CD8-positive, alpha-beta T cell (primary cell): ENCODE measurements at regions of chrX and their contacts with region 1.

Region 1: GRCh38 chrX:48696301-48697181 is at the start of gene SUV39H1:
- DNase-seq: peak; percentile 67 to 94 (median 79)
- ATAC-seq: peak; percentile 93
- H3K4me3 ChIP-seq: peak within 1 kb of the TSS; percentile 63 to 72
- H3K4me3 Mint-ChIP-seq: peak within 1 kb of the TSS; percentile 89
- H3K27ac ChIP-seq: peak within 1 kb of the TSS; percentile 85 to 87
- H3K27ac Mint-ChIP-seq: peak within 1 kb of the TSS; percentile 98
- H3K4me1 ChIP-seq: peaks cover 15% of the 10 kb centered on the region
- H3K4me1 Mint-ChIP-seq: peaks cover 27% of the 10 kb centered on the region
- H3K27me3 ChIP-seq: no peaks in the 10 kb centered on the region
- H3K27me3 Mint-ChIP-seq: no peaks in the 10 kb centered on the region
- CTCF ChIP-seq: no peak
- total RNA-seq, gene SUV39H1: 8.2 to 8.6 TPM

Region 2: DNA sequence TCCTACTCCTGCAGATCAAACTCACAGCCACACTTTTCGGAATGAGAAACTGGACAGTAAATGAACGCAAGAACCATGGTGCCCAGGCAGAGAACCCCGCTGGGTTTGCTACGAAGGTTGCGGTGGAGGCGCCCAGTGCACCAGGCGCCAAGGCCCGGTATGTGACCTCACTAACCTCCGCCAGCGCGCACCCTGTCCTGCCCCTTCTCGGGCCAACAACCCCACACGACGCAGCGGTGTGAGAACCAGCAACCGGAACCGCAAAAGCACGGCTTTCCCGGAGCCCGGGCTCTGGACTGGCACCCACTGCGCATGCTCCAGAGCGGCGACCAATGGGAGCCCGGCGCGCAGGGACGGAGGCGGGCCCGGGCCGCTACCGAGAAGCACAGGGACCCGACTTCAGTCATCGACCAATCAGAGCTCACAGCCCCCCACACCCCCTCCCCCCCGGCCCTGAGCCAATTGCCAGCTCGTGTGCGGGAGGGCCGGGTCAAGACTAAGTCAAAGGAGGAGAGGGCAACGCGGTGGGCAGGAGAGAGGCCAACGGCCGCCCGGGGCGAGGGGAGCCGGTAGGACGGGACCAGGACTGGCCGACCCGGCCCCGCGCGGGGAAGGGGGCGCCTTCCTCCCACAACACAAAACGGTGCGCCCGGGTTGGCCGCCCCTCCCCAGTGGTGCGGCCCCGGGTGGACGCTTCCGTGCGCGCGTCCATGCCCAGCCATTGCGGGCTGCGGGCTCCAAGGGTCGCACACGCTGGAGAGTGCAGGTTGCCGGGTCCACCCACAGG is 20.2 kb before region 1 on chrX:
- CTCF ChIA-PET with region 1: no interaction called
- POLR2A ChIA-PET with region 1: no interaction called
- intact Hi-C with region 1: loop called (anchors 1 kb)
- DNase-seq: peak; percentile 73 to 93 (median 83)
- ATAC-seq: peak; percentile 94
- H3K4me3 ChIP-seq: peak overlapping the region; percentile 74 to 76
- H3K4me3 Mint-ChIP-seq: peak overlapping the region; percentile 92
- H3K27ac ChIP-seq: peak overlapping the region; percentile 78 to 86
- H3K27ac Mint-ChIP-seq: peak overlapping the region; percentile 93
- H3K4me1 ChIP-seq: peaks cover 6% of the 10 kb centered on the region
- H3K4me1 Mint-ChIP-seq: peaks cover 30% of the 10 kb centered on the region
- H3K27me3 ChIP-seq: no peaks in the 10 kb centered on the region
- H3K27me3 Mint-ChIP-seq: no peaks in the 10 kb centered on the region
- CTCF ChIP-seq: no peak

Region 3: GRCh38 chrX:48683411-48683982 is 13.0 kb before region 1 on chrX and contains the start of gene WAS:
- CTCF ChIA-PET with region 1: no interaction called
- POLR2A ChIA-PET with region 1: interaction called, 17 read pairs
- intact Hi-C with region 1: loop called in 1 of 2 experiments (anchors 2 kb)
- DNase-seq: peak in 8 of 9 experiments; percentile 24 to 77 (median 48)
- ATAC-seq: peak; percentile 83
- H3K4me3 ChIP-seq: peak within 1 kb of the TSS; percentile 64 to 77
- H3K4me3 Mint-ChIP-seq: peak within 1 kb of the TSS; percentile 90
- H3K27ac ChIP-seq: peak within 1 kb of the TSS; percentile 73 to 87
- H3K27ac Mint-ChIP-seq: peak within 1 kb of the TSS; percentile 93
- H3K4me1 ChIP-seq: peaks cover 35% of the 10 kb centered on the region
- H3K4me1 Mint-ChIP-seq: peaks cover 58% of the 10 kb centered on the region
- H3K27me3 ChIP-seq: no peaks in the 10 kb centered on the region
- H3K27me3 Mint-ChIP-seq: no peaks in the 10 kb centered on the region
- CTCF ChIP-seq: no peak
- total RNA-seq, gene WAS: 50.6 to 54.9 TPM

Region 4: DNA sequence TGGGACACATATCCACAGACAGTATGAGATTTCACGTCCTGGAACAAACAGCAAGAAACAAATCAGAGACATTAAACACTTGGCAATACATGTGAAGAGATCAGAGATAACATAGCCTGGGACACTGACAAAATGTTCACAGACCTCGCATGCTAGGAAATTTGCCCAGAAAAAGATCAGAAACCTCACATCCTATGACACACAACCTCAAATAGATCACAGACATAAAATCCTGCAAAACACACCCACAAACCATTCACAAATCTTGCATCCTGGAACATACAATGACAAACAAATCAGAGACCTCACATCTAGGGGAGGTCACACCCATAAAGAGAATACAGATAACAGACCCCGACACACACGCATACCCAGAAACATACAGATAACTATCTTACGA is 18.0 kb after region 1 on chrX:
- CTCF ChIA-PET with region 1: no interaction called
- POLR2A ChIA-PET with region 1: interaction called, 3 read pairs
- intact Hi-C with region 1: loop called (anchors 2 kb)
- DNase-seq: peak in 2 of 9 experiments; percentile 40 to 62
- ATAC-seq: peak; percentile 34
- H3K4me3 ChIP-seq: peak overlapping the region in 1 of 2 experiments; percentile 35
- H3K4me3 Mint-ChIP-seq: peak overlapping the region; percentile 2
- H3K27ac ChIP-seq: peak overlapping the region; percentile 75 to 76
- H3K27ac Mint-ChIP-seq: peak overlapping the region; percentile 92
- H3K4me1 ChIP-seq: peaks cover 78% of the 10 kb centered on the region
- H3K4me1 Mint-ChIP-seq: peaks cover 83% of the 10 kb centered on the region
- H3K27me3 ChIP-seq: no peaks in the 10 kb centered on the region
- H3K27me3 Mint-ChIP-seq: no peaks in the 10 kb centered on the region
- CTCF ChIP-seq: no peak